Activated B cell treated with CpG ODN at 0.5 μM for 24 hours (primary cell): ENCODE measurements at regions of chr15 and their contacts with region 1.

Region 1: GRCh38 chr15:90221246-90221900 is 12.4 kb downstream of the CIB1 start:
- DNase-seq: no peak
- ATAC-seq: peak; percentile 43
- H3K4me3 Mint-ChIP-seq: no peak overlapping the region
- H3K27ac Mint-ChIP-seq: peak overlapping the region; percentile 56
- H3K4me1 Mint-ChIP-seq: peaks cover 49% of the 10 kb centered on the region
- H3K27me3 Mint-ChIP-seq: no peaks in the 10 kb centered on the region
- CTCF ChIP-seq: no peak

Region 2: GRCh38 chr15:89740137-89740536 is 481.2 kb before region 1 on chr15:
- CTCF ChIA-PET with region 1: no interaction called
- POLR2A ChIA-PET with region 1: no interaction called
- intact Hi-C with region 1: loop called (anchors 1 kb)
- DNase-seq: no peak
- ATAC-seq: peak; percentile 90
- H3K4me3 Mint-ChIP-seq: peak overlapping the region; percentile 15
- H3K27ac Mint-ChIP-seq: no peak overlapping the region
- H3K4me1 Mint-ChIP-seq: peaks cover 2% of the 10 kb centered on the region
- H3K27me3 Mint-ChIP-seq: peaks cover 8% of the 10 kb centered on the region
- CTCF ChIP-seq: peak; percentile 25

Region 3: GRCh38 chr15:90178468-90179435 is 42.6 kb before region 1 on chr15:
- CTCF ChIA-PET with region 1: interaction called, 130 read pairs
- POLR2A ChIA-PET with region 1: interaction called, 4 read pairs
- intact Hi-C with region 1: no loop called
- DNase-seq: no peak
- ATAC-seq: peak; percentile 62
- H3K4me3 Mint-ChIP-seq: peak overlapping the region; percentile 9
- H3K27ac Mint-ChIP-seq: peak overlapping the region; percentile 84
- H3K4me1 Mint-ChIP-seq: peaks cover 48% of the 10 kb centered on the region
- H3K27me3 Mint-ChIP-seq: no peaks in the 10 kb centered on the region
- CTCF ChIP-seq: no peak

Region 4: GRCh38 chr15:90184786-90185569 is 36.4 kb before region 1 on chr15:
- CTCF ChIA-PET with region 1: interaction called, 130 read pairs
- POLR2A ChIA-PET with region 1: interaction called, 29 read pairs
- intact Hi-C with region 1: loop called (anchors 1 kb)
- DNase-seq: peak; percentile 77
- ATAC-seq: peak; percentile 77
- H3K4me3 Mint-ChIP-seq: peak overlapping the region; percentile 90
- H3K27ac Mint-ChIP-seq: peak overlapping the region; percentile 88
- H3K4me1 Mint-ChIP-seq: peaks cover 75% of the 10 kb centered on the region
- H3K27me3 Mint-ChIP-seq: no peaks in the 10 kb centered on the region
- CTCF ChIP-seq: no peak

Region 5: GRCh38 chr15:90191794-90192509 is 29.4 kb before region 1 on chr15:
- CTCF ChIA-PET with region 1: interaction called, 130 read pairs
- POLR2A ChIA-PET with region 1: interaction called, 29 read pairs
- intact Hi-C with region 1: loop called (anchors 1 kb)
- DNase-seq: peak; percentile 69
- ATAC-seq: peak; percentile 75
- H3K4me3 Mint-ChIP-seq: peak overlapping the region; percentile 77
- H3K27ac Mint-ChIP-seq: peak overlapping the region; percentile 98
- H3K4me1 Mint-ChIP-seq: peaks cover 97% of the 10 kb centered on the region
- H3K27me3 Mint-ChIP-seq: no peaks in the 10 kb centered on the region
- CTCF ChIP-seq: no peak

Region 6: GRCh38 chr15:90265271-90266060 is 44.1 kb after region 1 on chr15 and contains the start of gene NGRN:
- CTCF ChIA-PET with region 1: interaction called, 3 read pairs
- POLR2A ChIA-PET with region 1: interaction called, 8 read pairs
- intact Hi-C with region 1: loop called (anchors 1 kb)
- DNase-seq: peak; percentile 93
- ATAC-seq: peak; percentile 85
- H3K4me3 Mint-ChIP-seq: peak within 1 kb of the TSS; percentile 93
- H3K27ac Mint-ChIP-seq: peak within 1 kb of the TSS; percentile 91
- H3K4me1 Mint-ChIP-seq: peaks cover 51% of the 10 kb centered on the region
- H3K27me3 Mint-ChIP-seq: no peaks in the 10 kb centered on the region
- CTCF ChIP-seq: no peak
- total RNA-seq, gene NGRN: 32.8 and 34.1 TPM in 2 replicates

Region 7: GRCh38 chr15:90286678-90287077 is 65.3 kb after region 1 on chr15:
- CTCF ChIA-PET with region 1: interaction called, 3 read pairs
- POLR2A ChIA-PET with region 1: no interaction called
- intact Hi-C with region 1: loop called (anchors 1 kb)
- DNase-seq: no peak
- ATAC-seq: peak; percentile 68
- H3K4me3 Mint-ChIP-seq: no peak overlapping the region
- H3K27ac Mint-ChIP-seq: no peak overlapping the region
- H3K4me1 Mint-ChIP-seq: peaks cover 3% of the 10 kb centered on the region
- H3K27me3 Mint-ChIP-seq: no peaks in the 10 kb centered on the region
- CTCF ChIP-seq: no peak